Activated CD4-positive, alpha-beta memory T cell treated with anti-CD3 and anti-CD28 coated beads for 36 hours (primary cell): ENCODE measurements at regions of chr7 and their contacts with region 1.

Region 1: GRCh38 chr7:38335492-38336147 is 62.2 kb upstream of the TARP start:
- DNase-seq: peak; percentile 89
- H3K4me3 Mint-ChIP-seq: peak overlapping the region; percentile 69
- H3K27ac Mint-ChIP-seq: peak overlapping the region; percentile 83
- H3K4me1 Mint-ChIP-seq: peaks cover 39% of the 10 kb centered on the region
- H3K27me3 Mint-ChIP-seq: no peaks in the 10 kb centered on the region

Region 2: DNA sequence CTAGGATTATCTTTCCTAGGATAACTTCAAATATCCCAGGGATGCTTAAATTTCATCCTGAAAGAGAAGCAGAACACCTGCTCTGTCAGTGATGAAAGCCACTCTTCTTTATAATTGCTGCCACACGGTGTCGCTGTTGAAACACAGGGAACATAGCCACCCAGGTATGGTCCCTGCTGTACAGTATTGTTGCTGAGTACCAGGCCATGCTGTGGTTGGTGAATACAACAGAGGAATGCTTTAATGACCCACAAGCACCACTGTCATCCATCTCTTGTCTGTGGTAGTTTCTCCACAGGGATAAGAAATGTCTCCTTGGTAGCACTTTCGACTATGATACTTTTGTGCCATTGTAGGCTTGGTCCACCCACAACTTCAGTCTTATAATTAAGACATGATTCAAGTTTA is 228.1 kb before region 1 on chr7:
- CTCF ChIA-PET with region 1: interaction called, 40 read pairs
- POLR2A ChIA-PET with region 1: no interaction called
- intact Hi-C with region 1: loop called (anchors 1 kb)
- DNase-seq: peak; percentile 73
- H3K4me3 Mint-ChIP-seq: no peak overlapping the region
- H3K27ac Mint-ChIP-seq: no peak overlapping the region
- H3K4me1 Mint-ChIP-seq: no peaks in the 10 kb centered on the region
- H3K27me3 Mint-ChIP-seq: peaks cover 13% of the 10 kb centered on the region

Region 3: GRCh38 chr7:38178004-38178694 is 157.5 kb before region 1 on chr7 and contains the start of gene STARD3NL:
- CTCF ChIA-PET with region 1: interaction called, 5 read pairs
- POLR2A ChIA-PET with region 1: no interaction called
- intact Hi-C with region 1: loop called (anchors 5 kb)
- DNase-seq: peak; percentile 92
- H3K4me3 Mint-ChIP-seq: peak within 1 kb of the TSS; percentile 96
- H3K27ac Mint-ChIP-seq: peak within 1 kb of the TSS; percentile 90
- H3K4me1 Mint-ChIP-seq: peaks cover 32% of the 10 kb centered on the region
- H3K27me3 Mint-ChIP-seq: peaks cover 9% of the 10 kb centered on the region
- total RNA-seq, gene STARD3NL: 34.4 to 34.7 TPM

Region 4: DNA sequence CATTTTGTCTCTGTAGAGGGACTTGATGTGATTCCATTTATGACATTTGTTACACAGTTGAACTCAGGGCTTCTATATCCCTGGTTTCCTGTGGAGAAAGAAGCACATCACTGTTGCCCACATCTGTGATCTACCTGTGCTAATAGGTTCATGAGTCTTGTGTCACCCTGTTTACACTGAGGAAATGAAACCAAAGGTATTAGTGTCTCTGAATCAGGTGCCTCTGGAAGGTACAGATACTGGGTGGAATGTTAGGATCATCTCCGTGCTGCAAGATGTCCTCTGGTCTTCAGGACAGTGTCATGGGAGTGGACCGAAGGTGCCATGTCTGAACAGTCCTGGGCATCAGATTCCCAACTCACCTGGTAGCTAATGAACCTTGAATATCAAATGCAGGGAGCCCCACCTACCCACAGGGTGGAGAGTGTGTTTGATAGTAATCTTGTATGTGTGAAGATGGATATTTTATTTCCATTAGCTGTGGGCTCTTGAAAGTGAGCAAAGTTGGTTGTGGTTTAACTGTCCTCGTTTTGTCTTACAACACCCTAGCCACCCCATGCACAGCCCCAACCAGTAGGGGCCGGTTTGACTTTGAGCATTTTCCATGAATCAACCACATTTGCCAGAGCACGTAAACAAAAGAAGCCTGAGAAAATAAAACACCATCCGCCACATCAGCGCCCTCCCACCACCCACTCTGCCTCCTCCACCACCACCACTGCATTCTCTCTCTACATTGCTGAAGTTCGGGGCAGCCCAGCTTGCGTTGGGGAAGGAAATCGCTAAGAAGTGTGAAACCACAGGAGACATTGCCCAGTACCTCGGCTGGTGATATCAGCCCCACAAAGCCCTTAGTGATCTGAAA is 102.9 kb before region 1 on chr7:
- CTCF ChIA-PET with region 1: interaction called, 14 read pairs
- POLR2A ChIA-PET with region 1: interaction called, 3 read pairs
- intact Hi-C with region 1: no loop called
- DNase-seq: peak; percentile 88
- H3K4me3 Mint-ChIP-seq: peak overlapping the region; percentile 44
- H3K27ac Mint-ChIP-seq: peak overlapping the region; percentile 77
- H3K4me1 Mint-ChIP-seq: peaks cover 44% of the 10 kb centered on the region
- H3K27me3 Mint-ChIP-seq: no peaks in the 10 kb centered on the region

Region 5: DNA sequence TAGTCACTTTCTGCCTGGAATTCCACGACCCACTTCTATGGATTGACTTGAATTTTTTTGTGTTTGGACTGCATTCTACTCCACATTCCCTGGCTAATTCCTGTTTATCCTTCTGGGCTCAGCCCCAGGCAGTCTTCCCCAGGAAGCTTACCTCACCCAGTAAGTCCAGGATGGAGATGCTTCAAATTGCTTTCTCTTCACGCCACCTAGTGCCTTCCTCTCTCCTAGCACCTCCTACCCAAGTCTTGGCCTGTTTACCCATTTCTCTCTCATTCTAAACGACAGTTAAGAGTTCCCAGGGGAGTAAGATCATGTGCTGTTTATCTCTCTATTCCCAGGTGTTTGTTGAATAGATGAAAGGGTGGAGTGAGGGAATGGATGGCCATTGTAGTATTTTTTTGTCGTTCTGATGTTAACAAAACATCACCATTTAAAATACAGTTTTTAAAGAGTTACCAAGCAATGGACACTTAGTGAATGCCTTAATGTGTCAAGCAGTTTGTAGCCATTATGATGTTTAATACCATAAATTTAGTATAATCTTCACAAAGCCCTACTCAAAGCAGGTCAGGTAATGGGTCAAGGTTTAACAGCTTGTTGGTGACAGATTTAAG is 16.7 kb before region 1 on chr7:
- CTCF ChIA-PET with region 1: interaction called, 72 read pairs
- POLR2A ChIA-PET with region 1: no interaction called
- intact Hi-C with region 1: no loop called
- DNase-seq: peak; percentile 30
- H3K4me3 Mint-ChIP-seq: peak overlapping the region; percentile 38
- H3K27ac Mint-ChIP-seq: peak overlapping the region; percentile 67
- H3K4me1 Mint-ChIP-seq: peaks cover 25% of the 10 kb centered on the region
- H3K27me3 Mint-ChIP-seq: no peaks in the 10 kb centered on the region

Region 6: GRCh38 chr7:38351601-38352000 is 16.0 kb after region 1 on chr7:
- CTCF ChIA-PET with region 1: interaction called, 14 read pairs
- POLR2A ChIA-PET with region 1: no interaction called
- intact Hi-C with region 1: no loop called
- DNase-seq: no peak
- H3K4me3 Mint-ChIP-seq: peak overlapping the region; percentile 82
- H3K27ac Mint-ChIP-seq: peak overlapping the region; percentile 86
- H3K4me1 Mint-ChIP-seq: peaks cover 15% of the 10 kb centered on the region
- H3K27me3 Mint-ChIP-seq: no peaks in the 10 kb centered on the region

Region 7: GRCh38 chr7:38360776-38361175 is 25.2 kb after region 1 on chr7:
- CTCF ChIA-PET with region 1: interaction called, 10 read pairs
- POLR2A ChIA-PET with region 1: no interaction called
- intact Hi-C with region 1: no loop called
- DNase-seq: no peak
- H3K4me3 Mint-ChIP-seq: peak overlapping the region; percentile 88
- H3K27ac Mint-ChIP-seq: peak overlapping the region; percentile 99
- H3K4me1 Mint-ChIP-seq: peaks cover 48% of the 10 kb centered on the region
- H3K27me3 Mint-ChIP-seq: no peaks in the 10 kb centered on the region

Region 8: DNA sequence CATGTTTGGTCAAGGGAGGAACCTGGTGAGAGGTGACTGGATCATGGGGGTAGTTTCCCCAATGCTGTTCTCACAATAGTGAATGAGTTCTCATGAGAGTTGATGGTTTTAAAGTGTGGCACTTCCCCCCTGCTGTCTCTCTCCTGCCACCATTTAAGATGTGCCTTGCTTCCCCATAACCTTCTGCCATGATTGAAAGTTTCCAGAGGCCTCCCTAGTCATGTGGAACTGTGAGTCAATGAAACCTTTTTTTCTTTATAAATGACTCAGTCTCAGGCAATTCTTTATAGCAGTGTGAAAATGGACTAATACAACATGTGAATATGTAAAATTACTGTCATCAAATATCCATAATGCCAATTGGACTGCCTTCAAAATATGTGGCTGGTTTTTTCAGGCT is 103.3 kb after region 1 on chr7:
- CTCF ChIA-PET with region 1: no interaction called
- POLR2A ChIA-PET with region 1: no interaction called
- intact Hi-C with region 1: no loop called
- DNase-seq: no peak
- H3K4me3 Mint-ChIP-seq: no peak overlapping the region
- H3K27ac Mint-ChIP-seq: no peak overlapping the region
- H3K4me1 Mint-ChIP-seq: peaks cover 6% of the 10 kb centered on the region
- H3K27me3 Mint-ChIP-seq: no peaks in the 10 kb centered on the region